Posterior cingulate gyrus (tissue), 11 donors: ENCODE measurements at regions of chr11 and their contacts with region 1.

Region 1: GRCh38 chr11:78549624-78550409 is 24.8 kb downstream of the NARS2 start:
- DNase-seq: no peak

Region 2: GRCh38 chr11:78212586-78213371 is 337.0 kb before region 1 on chr11:
- intact Hi-C with region 1: loop called (anchors 10 kb)
- DNase-seq: peak in 6 of 10 donors; percentile 41 to 91 (median 69)

Region 3: GRCh38 chr11:78493413-78493975 is 56.3 kb before region 1 on chr11:
- intact Hi-C with region 1: no loop called
- DNase-seq: no peak